Caco-2 (cell line): ENCODE measurements at regions of chr16 and their contacts with region 1.

Region 1: DNA sequence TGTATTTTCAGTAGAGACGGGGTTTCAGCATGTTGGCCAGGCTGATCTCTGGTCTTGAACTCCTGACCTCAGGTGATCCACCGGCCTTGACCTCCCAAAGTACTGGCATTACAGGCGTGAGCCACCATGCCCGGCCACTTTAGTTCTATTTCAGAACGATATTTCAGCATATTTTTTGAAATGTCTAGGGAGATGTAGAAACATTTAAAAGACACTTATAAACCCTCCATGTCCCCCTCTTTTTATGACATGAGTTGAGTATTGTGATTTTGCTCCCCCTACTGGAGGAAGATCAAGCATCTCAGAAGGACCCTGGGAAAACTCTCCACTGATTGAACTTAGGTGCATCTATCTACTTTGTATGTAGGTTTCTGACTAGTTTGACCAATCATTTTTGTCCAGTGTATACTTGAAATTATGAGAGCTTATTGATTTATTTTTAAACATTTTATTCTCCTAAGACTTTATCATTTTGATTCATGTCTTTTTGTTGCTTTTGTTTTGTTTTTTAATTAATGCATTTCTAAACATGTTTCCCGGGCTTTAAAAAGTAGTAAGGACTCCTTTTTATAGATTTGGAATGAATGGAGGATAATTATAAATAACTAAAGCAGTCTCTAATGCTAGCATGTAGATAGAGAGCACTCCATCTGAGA is 105.1 kb downstream of the CHD9 start:
- DNase-seq: peak in 1 of 2 experiments; percentile 65
- H3K4me3 ChIP-seq: no peak overlapping the region
- H3K4me3 Mint-ChIP-seq: no peak overlapping the region
- H3K27ac Mint-ChIP-seq: no peak overlapping the region
- H3K4me1 ChIP-seq: no peaks in the 10 kb centered on the region
- H3K4me1 Mint-ChIP-seq: no peaks in the 10 kb centered on the region
- H3K27me3 ChIP-seq: no peaks in the 10 kb centered on the region
- H3K27me3 Mint-ChIP-seq: no peaks in the 10 kb centered on the region
- CTCF ChIP-seq: peak; percentile 76 to 89

Region 2: DNA sequence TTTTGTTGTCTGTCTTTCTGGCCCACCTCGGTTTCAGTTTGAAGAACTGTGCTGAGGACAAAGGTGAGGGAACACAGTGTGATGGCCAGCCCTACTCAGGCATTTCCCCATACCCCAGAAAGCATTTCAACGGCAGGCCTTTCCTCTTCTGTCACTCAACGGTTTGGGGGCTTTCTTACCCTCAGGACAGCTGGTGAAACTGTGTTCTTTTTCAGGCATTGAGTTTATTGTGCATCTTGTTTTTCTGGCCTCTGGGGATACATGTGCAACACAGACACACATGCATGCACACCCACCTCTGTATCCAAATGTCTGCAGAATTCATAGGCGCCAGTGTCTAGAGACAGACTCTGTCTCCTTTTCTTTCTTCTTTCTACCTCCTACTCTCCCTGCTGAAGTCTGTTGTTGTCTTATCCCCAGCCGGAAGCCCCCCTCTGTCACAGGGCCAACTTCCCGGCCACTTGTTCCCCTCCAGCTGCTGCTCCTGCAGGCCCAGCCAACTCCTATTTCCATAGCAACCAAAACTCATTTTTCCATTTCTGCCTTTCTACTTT is 88.1 kb before region 1 on chr16:
- CTCF ChIA-PET with region 1: no interaction called
- POLR2A ChIA-PET with region 1: no interaction called
- intact Hi-C with region 1: no loop called
- DNase-seq: no peak
- H3K4me3 ChIP-seq: no peak overlapping the region
- H3K4me3 Mint-ChIP-seq: no peak overlapping the region
- H3K27ac Mint-ChIP-seq: no peak overlapping the region
- H3K4me1 ChIP-seq: no peaks in the 10 kb centered on the region
- H3K4me1 Mint-ChIP-seq: no peaks in the 10 kb centered on the region
- H3K27me3 ChIP-seq: no peaks in the 10 kb centered on the region
- H3K27me3 Mint-ChIP-seq: no peaks in the 10 kb centered on the region
- CTCF ChIP-seq: no peak

Region 3: DNA sequence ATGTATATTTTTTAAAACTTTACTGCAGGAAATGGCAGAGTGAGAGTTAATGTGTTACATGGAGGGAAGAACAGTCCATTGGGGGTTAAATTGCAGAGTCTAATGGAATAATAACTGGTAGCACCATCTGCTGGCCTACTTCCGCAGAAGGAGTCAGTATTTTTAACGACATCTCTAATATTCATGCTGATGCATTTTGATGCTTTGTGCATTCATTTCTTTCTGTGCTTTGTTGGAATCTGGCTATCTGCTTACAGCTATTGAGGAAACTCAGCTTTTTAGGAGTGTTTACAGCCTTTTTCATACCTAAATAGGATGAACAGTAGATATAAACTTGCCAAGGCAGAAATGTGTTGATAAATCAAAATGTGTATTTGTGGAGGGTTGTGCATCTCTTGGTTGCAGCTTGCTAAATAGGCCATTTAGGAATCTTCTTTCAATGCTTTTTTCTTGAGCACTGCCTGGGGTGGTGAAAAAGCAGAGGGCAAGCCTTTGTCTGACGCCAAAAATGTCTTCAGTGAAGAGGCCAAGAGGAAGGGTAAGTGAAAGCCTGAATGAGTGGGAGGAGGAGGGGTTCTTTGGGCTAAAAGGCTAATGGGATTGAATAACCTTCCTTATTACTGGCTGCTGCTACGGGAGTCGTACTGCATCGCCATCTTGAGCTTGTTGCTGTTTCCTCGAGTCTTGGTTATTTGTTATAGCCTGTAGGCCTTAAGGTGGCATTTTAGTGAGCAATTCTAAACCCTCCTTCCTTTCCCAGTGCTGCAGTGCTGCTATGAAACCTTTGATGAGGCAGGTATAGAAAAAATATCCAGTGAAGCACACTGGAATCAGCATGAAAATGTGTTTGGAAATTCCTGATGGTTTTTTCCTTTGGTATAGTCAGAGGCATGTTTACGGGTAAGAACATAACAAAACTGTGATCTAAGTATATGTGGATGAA is 48.2 kb after region 1 on chr16:
- CTCF ChIA-PET with region 1: no interaction called
- POLR2A ChIA-PET with region 1: no interaction called
- intact Hi-C with region 1: loop called (anchors 5 kb)
- DNase-seq: peak; percentile 76 to 77
- H3K4me3 ChIP-seq: peak overlapping the region; percentile 43
- H3K4me3 Mint-ChIP-seq: peak overlapping the region; percentile 93
- H3K27ac Mint-ChIP-seq: peak overlapping the region; percentile 97
- H3K4me1 ChIP-seq: no peaks in the 10 kb centered on the region; the same call in 1 of the 2 replicates
- H3K4me1 Mint-ChIP-seq: peaks cover 14% of the 10 kb centered on the region
- H3K27me3 ChIP-seq: no peaks in the 10 kb centered on the region
- H3K27me3 Mint-ChIP-seq: no peaks in the 10 kb centered on the region
- CTCF ChIP-seq: peak; percentile 71 to 77

Region 4: DNA sequence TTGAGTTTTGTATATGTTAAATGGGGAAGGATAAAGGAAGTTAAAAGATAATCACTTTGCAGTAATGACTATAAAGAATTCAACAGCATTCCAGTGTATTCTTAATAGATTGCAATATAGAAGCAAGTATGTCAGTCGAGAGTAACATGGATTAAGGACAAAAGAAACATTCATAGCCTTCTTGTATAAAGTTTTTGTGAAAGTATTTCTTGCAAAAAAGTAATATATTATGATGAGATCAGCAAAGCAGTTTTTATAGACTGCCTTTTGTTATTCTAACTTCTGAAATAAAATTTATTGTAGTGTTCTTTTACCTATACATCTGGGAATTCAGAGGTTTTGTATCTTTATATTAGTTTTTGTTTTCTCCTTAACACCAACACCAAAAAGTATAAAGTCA is 89.4 kb after region 1 on chr16:
- CTCF ChIA-PET with region 1: no interaction called
- POLR2A ChIA-PET with region 1: no interaction called
- intact Hi-C with region 1: no loop called
- DNase-seq: no peak
- H3K4me3 ChIP-seq: no peak overlapping the region
- H3K4me3 Mint-ChIP-seq: no peak overlapping the region
- H3K27ac Mint-ChIP-seq: no peak overlapping the region
- H3K4me1 ChIP-seq: no peaks in the 10 kb centered on the region
- H3K4me1 Mint-ChIP-seq: no peaks in the 10 kb centered on the region
- H3K27me3 ChIP-seq: no peaks in the 10 kb centered on the region
- H3K27me3 Mint-ChIP-seq: no peaks in the 10 kb centered on the region
- CTCF ChIP-seq: no peak